ENCODE measurements at regions of chr6 and their contacts with region 1.

Region 1: GRCh38 chr6:33454009-33454946 is at the start of gene ZBTB9:
- DNase-seq: peak; percentile 96
- ATAC-seq: peak; percentile 99
- H3K4me3 Mint-ChIP-seq: peak within 1 kb of the TSS; percentile 84
- H3K27ac Mint-ChIP-seq: peak within 1 kb of the TSS; percentile 90
- H3K4me1 Mint-ChIP-seq: peaks cover 29% of the 10 kb centered on the region
- H3K27me3 Mint-ChIP-seq: no peaks in the 10 kb centered on the region
- CTCF ChIP-seq: no peak
- total RNA-seq, gene ZBTB9: 7.8 to 8.7 TPM

Region 2: GRCh38 chr6:33439956-33440648 is 14.2 kb before region 1 on chr6:
- CTCF ChIA-PET with region 1: interaction called, 3 read pairs
- POLR2A ChIA-PET with region 1: interaction called, 14 read pairs
- intact Hi-C with region 1: no loop called
- DNase-seq: no peak
- ATAC-seq: no peak
- H3K4me3 Mint-ChIP-seq: no peak overlapping the region
- H3K27ac Mint-ChIP-seq: peak overlapping the region; percentile 64
- H3K4me1 Mint-ChIP-seq: peaks cover 7% of the 10 kb centered on the region
- H3K27me3 Mint-ChIP-seq: no peaks in the 10 kb centered on the region
- CTCF ChIP-seq: no peak

Region 3: GRCh38 chr6:33534702-33535101 is 80.4 kb after region 1 on chr6:
- CTCF ChIA-PET with region 1: no interaction called
- POLR2A ChIA-PET with region 1: no interaction called
- intact Hi-C with region 1: no loop called
- DNase-seq: no peak
- ATAC-seq: no peak
- H3K4me3 Mint-ChIP-seq: no peak overlapping the region
- H3K27ac Mint-ChIP-seq: no peak overlapping the region
- H3K4me1 Mint-ChIP-seq: peaks cover 9% of the 10 kb centered on the region
- H3K27me3 Mint-ChIP-seq: no peaks in the 10 kb centered on the region
- CTCF ChIP-seq: no peak

Region 4: DNA sequence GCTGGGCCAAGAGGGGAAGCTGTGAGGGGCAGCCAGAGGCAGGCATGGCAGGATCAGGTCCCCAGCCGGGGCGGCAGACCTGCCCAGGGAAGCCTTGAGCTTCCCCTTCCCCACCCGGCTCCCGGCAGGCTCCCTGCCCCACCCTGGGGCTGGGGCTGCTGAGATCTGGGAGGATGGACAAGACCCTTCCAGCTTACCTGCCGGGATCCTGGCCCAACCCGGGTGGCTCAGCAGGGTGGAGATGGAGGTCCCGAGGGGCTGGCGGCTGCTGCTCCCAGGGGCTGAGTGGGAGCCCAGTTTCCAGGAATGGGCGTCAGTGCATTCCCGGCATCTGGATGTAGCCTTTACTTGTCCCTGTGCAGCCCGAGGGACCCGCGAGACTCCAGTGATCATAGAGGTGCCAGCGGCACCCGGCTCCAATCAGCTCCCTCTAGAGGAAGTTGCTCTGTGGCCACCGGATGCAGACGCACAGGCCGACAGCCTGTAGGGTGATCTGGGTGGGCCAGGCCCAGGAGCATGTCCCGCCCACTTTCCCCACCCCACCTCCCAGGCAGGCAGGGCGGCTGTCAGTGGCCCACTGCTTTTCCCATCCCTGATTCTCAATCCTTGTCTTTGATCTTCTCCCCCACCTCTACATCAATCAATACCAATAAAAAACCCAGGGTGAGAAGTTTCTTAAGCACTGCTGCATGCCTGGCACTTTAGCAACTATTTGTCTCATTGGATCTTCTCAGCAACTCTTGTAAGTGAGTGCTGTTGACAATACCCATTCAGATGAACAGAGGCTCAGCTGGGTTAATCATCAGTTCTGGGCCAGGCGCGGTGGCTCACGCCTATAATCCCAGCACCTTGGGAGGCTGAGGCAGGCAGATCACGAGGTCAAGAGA is 125.8 kb after region 1 on chr6 and contains the start of gene BAK1:
- CTCF ChIA-PET with region 1: interaction called, 5 read pairs
- POLR2A ChIA-PET with region 1: no interaction called
- intact Hi-C with region 1: loop called (anchors 10 kb)
- DNase-seq: peak; percentile 93
- ATAC-seq: peak; percentile 97
- H3K4me3 Mint-ChIP-seq: peak within 1 kb of the TSS; percentile 83
- H3K27ac Mint-ChIP-seq: peak within 1 kb of the TSS; percentile 92
- H3K4me1 Mint-ChIP-seq: peaks cover 26% of the 10 kb centered on the region
- H3K27me3 Mint-ChIP-seq: no peaks in the 10 kb centered on the region
- CTCF ChIP-seq: peak; percentile 71
- total RNA-seq, gene BAK1: 33.8 to 34.3 TPM

Measured in activated CD8-positive, alpha-beta T cell treated with anti-CD3 and anti-CD28 coated beads for 36 hours (primary cell).